ENCODE measurements at regions of chr2 and their contacts with region 1.

Region 1: GRCh38 chr2:66013465-66013864 is 421.5 kb upstream of the MEIS1 start:
- DNase-seq: no peak
- ATAC-seq: no peak
- H3K4me3 Mint-ChIP-seq: no peak overlapping the region
- H3K27ac Mint-ChIP-seq: no peak overlapping the region
- H3K4me1 Mint-ChIP-seq: no peaks in the 10 kb centered on the region
- H3K27me3 Mint-ChIP-seq: no peaks in the 10 kb centered on the region

Region 2: GRCh38 chr2:65960953-65961352 is 52.5 kb before region 1 on chr2:
- CTCF ChIA-PET with region 1: no interaction called
- POLR2A ChIA-PET with region 1: no interaction called
- intact Hi-C with region 1: no loop called
- DNase-seq: no peak
- ATAC-seq: no peak
- H3K4me3 Mint-ChIP-seq: no peak overlapping the region
- H3K27ac Mint-ChIP-seq: no peak overlapping the region
- H3K4me1 Mint-ChIP-seq: no peaks in the 10 kb centered on the region
- H3K27me3 Mint-ChIP-seq: no peaks in the 10 kb centered on the region

Region 3: GRCh38 chr2:65999796-66000195 is 13.7 kb before region 1 on chr2:
- CTCF ChIA-PET with region 1: interaction called, 14 read pairs
- POLR2A ChIA-PET with region 1: no interaction called
- intact Hi-C with region 1: no loop called
- DNase-seq: no peak
- ATAC-seq: no peak
- H3K4me3 Mint-ChIP-seq: no peak overlapping the region
- H3K27ac Mint-ChIP-seq: no peak overlapping the region
- H3K4me1 Mint-ChIP-seq: no peaks in the 10 kb centered on the region
- H3K27me3 Mint-ChIP-seq: peaks cover 2% of the 10 kb centered on the region

Measured in activated CD4-positive, alpha-beta T cell treated with anti-CD3 and anti-CD28 coated beads for 36 hours (primary cell).